Heart right ventricle (tissue), 16 donors: ENCODE measurements at regions of chr14 and their contacts with region 1.

Region 1: GRCh38 chr14:104689109-104689880 is at the start of gene INF2:
- DNase-seq: peak; percentile 60 to 75
- ATAC-seq: peak; percentile 64 to 86 (median 72)
- H3K4me3 ChIP-seq: peak within 1 kb of the TSS; percentile 84 to 99 (median 94)
- H3K27ac ChIP-seq: peak within 1 kb of the TSS; percentile 58 to 94 (median 90)
- H3K4me1 ChIP-seq: peaks cover 36 to 74% (median 63%) of the 10 kb centered on the region in 9 donors
- H3K27me3 ChIP-seq: no peaks in the 10 kb centered on the region
- CTCF ChIP-seq: peak in 3 of 9 donors; percentile 7 to 21 (median 20)
- total RNA-seq, gene INF2: 22.5 to 40.1 (median 27.7) TPM

Region 2: DNA sequence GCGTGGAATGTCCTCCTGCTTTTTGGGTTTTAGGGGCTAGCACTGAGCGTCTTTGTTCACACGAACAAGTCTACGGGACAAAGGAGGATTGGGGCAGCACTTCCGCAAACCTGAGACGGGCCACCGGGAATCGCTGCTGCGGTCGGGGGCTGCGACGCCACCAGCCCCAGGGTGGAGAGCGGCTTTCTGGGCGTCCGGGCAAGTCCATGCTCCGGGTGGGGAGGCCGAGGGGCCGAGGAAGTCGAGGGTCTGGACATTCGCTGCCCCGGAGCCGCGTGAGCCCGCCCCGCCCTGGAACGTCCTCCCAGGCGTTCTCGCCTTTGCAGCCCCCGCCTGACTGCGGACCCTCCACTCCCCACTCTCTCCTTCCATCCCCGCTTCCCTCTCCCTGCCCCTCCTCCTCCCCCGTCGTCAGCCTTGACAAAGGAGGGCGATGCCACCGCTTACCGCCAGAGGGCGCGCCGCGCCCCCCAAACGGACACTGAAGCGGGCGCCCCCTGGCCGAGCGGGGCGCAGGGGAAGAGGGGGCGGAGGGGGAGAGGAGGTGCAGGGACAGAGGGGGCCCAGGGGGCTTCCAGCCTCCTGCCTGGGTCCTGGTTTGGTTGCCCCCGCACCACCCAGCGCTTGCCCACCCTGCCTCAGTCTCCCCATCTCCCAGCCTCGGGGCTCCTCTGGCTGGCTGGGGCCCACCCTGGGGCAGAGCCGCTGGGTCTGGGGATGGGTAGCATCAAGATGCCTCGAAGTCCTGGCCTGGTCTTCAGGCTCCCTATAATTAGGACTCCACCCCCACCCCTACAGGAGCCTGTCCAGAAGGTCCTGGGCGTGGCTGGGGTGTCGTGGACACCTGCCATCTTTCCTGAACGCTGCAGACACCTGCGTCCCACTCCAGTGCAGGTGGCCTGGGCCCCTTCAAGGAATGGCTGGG is 39.0 kb before region 1 on chr14:
- intact Hi-C with region 1: loop called in 1 of 10 experiments (anchors 5 kb)
- DNase-seq: peak; percentile 62 to 76
- ATAC-seq: peak; percentile 78 to 90 (median 86)
- H3K4me3 ChIP-seq: peak overlapping the region; percentile 26 to 57 (median 48)
- H3K27ac ChIP-seq: peak overlapping the region in 1 of 10 donors; percentile 39
- H3K4me1 ChIP-seq: peaks cover 0 to 22% (median 11%) of the 10 kb centered on the region in 9 donors
- H3K27me3 ChIP-seq: no peaks in the 10 kb centered on the region
- CTCF ChIP-seq: peak; percentile 96 to 99 (median 98)

Region 3: GRCh38 chr14:105065280-105066228 is 376.3 kb after region 1 on chr14 and contains the start of gene GPR132:
- intact Hi-C with region 1: no loop called
- DNase-seq: peak in 1 of 2 donors; percentile 34
- ATAC-seq: peak; percentile 8 to 47 (median 26)
- H3K4me3 ChIP-seq: peak within 1 kb of the TSS in 6 of 10 donors; percentile 23 to 60 (median 32)
- H3K27ac ChIP-seq: peak within 1 kb of the TSS in 8 of 10 donors; percentile 49 to 96 (median 61)
- H3K4me1 ChIP-seq: peaks cover 14 to 92% (median 28%) of the 10 kb centered on the region in 9 donors
- H3K27me3 ChIP-seq: peaks cover 0 to 10% (median 0%) of the 10 kb centered on the region in 7 donors
- CTCF ChIP-seq: no peak
- total RNA-seq, gene GPR132: 0.19 to 4.1 (median 0.82) TPM